ENCODE measurements at regions of chr5 and their contacts with region 1.

Region 1: DNA sequence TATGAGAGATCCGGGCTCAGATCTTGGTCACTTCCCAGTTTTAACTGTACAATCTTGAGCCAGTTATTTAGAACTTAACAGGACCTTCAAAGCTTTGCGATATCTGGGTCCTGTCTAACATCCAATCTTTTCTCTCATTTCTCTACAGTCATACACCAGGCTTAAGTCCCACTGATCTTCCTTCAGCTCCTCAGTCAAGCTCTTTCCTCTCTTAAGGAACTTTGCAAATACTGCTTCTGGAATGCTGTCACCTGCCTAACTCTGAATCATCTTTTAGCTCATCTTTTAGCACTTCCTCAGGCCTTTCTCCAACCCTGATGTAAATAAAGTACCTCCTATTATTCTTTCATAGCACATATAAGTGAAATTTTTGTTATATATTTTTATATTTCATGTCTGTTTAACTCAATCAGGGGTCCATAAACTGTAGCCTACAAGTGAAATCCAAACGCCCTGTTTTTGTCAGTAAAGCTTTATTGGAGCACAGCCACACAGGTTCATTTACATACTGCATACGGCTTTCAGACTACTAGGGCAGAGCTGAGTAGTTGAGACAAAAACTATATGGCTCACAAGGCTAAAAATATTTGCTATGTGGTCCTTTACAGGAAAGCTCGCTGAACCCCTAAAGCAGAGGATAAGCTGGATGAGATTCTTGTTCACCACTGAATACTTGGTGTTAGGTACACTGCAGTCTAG is 63.5 kb downstream of the MEF2C start:
- DNase-seq: no peak
- CTCF ChIP-seq: no peak

Region 2: GRCh38 chr5:88808153-88808552 is 11.3 kb before region 1 on chr5:
- CTCF ChIA-PET with region 1: interaction called, 11 read pairs
- POLR2A ChIA-PET with region 1: no interaction called
- DNase-seq: no peak
- CTCF ChIP-seq: no peak

Region 3: GRCh38 chr5:88836195-88836838 is 16.9 kb after region 1 on chr5:
- CTCF ChIA-PET with region 1: interaction called, 31 read pairs
- POLR2A ChIA-PET with region 1: no interaction called
- DNase-seq: no peak
- CTCF ChIP-seq: no peak